OCI-LY7 (cell line): ENCODE measurements at regions of chr9 and their contacts with region 1.

Region 1: GRCh38 chr9:97921959-97922724 is at the start of gene TRMO:
- DNase-seq: peak; percentile 100
- H3K4me3 ChIP-seq: peak within 1 kb of the TSS; percentile 72
- H3K27ac ChIP-seq: peak within 1 kb of the TSS; percentile 85
- H3K4me1 ChIP-seq: peaks cover 45% of the 10 kb centered on the region
- CTCF ChIP-seq: peak; percentile 83
- total RNA-seq, gene TRMO: 17.6 and 34.7 TPM in 2 replicates

Region 2: DNA sequence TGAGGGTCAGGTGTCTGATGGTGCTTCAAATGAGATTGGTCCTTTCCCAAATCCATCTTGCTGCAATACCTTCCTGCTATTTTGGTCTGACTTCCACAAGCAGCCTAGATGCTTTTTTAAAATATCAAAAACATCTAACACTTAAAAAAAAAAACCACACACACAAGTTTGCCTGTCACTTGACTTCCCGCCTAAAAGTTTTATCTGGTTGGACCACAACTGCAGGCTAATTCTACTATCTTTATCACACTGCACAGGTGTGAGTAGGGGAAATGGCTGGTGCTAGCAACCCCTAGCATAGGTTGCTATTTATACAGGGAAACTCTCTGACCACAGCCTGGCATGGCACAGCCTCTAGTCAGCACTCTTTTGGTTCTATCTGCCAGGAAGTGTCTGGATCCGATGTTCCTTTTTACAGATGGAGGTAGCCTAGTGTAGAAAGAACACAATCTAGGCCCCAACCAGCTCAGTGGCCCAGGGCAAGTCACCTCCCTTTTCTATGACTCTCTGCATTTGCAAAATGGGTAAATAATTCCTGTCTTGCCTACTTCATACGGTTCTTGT is 16.0 kb after region 1 on chr9 and contains the start of gene HEMGN:
- CTCF ChIA-PET with region 1: interaction called, 4 read pairs
- POLR2A ChIA-PET with region 1: interaction called, 22 read pairs
- intact Hi-C with region 1: no loop called
- DNase-seq: peak; percentile 92
- H3K4me3 ChIP-seq: peak within 1 kb of the TSS; percentile 60
- H3K27ac ChIP-seq: peak within 1 kb of the TSS; percentile 91
- H3K4me1 ChIP-seq: peaks cover 93% of the 10 kb centered on the region
- CTCF ChIP-seq: no peak; the same call in 1 of the 2 replicates
- total RNA-seq, gene HEMGN: 4.3 and 5.4 TPM in 2 replicates

Region 3: DNA sequence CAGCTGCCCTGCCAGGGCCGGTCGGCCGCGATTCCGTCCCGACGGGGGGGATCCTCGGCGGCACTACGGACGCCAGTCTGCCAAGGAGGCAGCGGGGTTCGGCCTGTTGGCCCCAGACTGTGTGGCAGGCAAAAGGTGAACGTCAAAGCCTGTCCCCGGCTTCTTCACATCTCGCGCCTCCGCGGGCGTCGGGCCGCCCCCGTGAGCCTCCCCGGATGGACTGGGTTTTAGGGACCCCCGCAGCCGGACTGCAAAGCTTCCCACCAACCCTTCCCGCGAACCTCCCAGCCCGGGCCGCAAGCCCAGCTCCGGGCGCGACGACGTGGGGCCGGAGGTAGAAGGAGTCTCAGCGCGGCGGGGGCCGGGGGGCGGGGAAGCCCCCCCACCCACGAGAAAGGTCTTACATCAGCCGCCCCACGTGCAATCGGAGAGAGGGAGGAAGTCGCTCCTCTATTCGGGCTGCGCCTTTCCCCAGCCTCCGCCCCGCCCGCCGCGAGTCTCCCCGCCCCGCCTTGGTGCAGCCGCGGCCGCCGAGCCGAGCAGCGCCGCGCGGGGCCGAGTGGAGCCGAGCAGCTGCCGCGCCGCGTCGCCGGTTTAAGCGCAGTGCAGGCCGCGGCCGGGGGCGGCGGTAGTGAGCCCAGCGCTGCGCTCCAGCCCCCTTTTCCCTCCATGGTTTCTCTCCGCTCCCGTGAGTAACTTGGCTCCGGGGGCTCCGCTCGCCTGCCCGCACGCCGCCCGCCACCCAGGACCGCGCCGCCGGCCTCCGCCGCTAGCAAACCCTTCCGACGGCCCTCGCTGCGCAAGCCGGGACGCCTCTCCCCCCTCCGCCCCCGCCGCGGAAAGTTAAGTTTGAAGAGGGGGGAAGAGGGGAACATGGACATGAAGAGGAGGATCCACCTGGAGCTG is 60.8 kb after region 1 on chr9 and contains the start of gene ANP32B:
- CTCF ChIA-PET with region 1: interaction called, 4 read pairs
- POLR2A ChIA-PET with region 1: interaction called, 14 read pairs
- intact Hi-C with region 1: loop called (anchors 1 kb)
- DNase-seq: peak; percentile 96
- H3K4me3 ChIP-seq: peak within 1 kb of the TSS; percentile 92
- H3K27ac ChIP-seq: peak within 1 kb of the TSS; percentile 85
- H3K4me1 ChIP-seq: peaks cover 66% of the 10 kb centered on the region
- CTCF ChIP-seq: peak; percentile 72
- total RNA-seq, gene ANP32B: 32.1 and 52.7 TPM in 2 replicates

Region 4: DNA sequence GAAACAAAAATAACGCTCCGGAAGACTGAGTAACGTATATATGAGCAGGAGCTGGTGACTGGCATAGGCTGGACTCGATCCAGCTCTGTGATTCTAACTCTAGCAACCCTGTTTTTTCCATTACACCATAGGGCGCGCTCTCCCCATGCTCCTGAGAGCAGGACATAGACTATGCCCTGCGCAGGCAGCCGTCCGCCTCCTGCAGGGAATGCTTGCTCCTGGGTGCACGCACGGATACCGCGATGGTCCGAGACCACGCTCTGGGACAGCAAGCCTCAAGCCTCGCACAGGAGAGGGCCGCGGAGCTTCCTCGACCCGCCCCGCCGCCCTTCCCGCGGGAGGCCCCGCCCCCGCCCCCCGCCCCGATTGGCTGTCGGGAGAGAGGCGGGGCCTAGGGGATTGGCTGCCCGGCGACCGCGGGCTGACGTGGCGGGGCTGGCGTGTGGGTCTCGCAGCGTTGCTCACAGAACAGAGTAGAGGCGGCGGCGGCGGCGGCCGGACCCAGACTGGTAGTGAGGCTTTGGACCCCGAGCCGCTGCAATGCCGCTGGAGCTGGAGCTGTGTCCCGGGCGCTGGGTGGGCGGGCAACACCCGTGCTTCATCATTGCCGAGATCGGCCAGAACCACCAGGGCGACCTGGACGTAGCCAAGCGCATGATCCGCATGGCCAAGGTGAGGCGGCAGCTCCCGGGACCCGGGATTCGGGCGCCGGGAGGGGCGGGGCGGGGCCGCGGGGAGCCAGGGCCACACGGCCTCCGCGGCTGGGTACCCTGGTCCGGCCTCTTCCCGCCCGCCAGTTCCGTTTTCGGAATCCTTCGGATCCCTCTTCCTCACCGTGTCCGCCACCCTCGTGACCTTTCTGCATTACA is 134.4 kb after region 1 on chr9 and contains the start of gene NANS:
- CTCF ChIA-PET with region 1: interaction called, 8 read pairs
- POLR2A ChIA-PET with region 1: interaction called, 6 read pairs
- intact Hi-C with region 1: loop called (anchors 1 kb)
- DNase-seq: peak; percentile 94
- H3K4me3 ChIP-seq: peak within 1 kb of the TSS; percentile 87
- H3K27ac ChIP-seq: peak within 1 kb of the TSS; percentile 42
- H3K4me1 ChIP-seq: peaks cover 11% of the 10 kb centered on the region
- CTCF ChIP-seq: no peak
- total RNA-seq, gene NANS: 63.7 and 70.6 TPM in 2 replicates

Region 5: GRCh38 chr9:98255578-98256296 is 333.6 kb after region 1 on chr9 and contains the start of gene TBC1D2:
- CTCF ChIA-PET with region 1: no interaction called
- POLR2A ChIA-PET with region 1: interaction called, 7 read pairs
- intact Hi-C with region 1: loop called (anchors 1 kb)
- DNase-seq: peak; percentile 95
- H3K4me3 ChIP-seq: peak within 1 kb of the TSS; percentile 75
- H3K27ac ChIP-seq: peak within 1 kb of the TSS; percentile 85
- H3K4me1 ChIP-seq: peaks cover 17% of the 10 kb centered on the region
- CTCF ChIP-seq: peak; percentile 51; the same call in 1 of the 2 replicates
- total RNA-seq, gene TBC1D2: 2.5 and 5.5 TPM in 2 replicates

Region 6: DNA sequence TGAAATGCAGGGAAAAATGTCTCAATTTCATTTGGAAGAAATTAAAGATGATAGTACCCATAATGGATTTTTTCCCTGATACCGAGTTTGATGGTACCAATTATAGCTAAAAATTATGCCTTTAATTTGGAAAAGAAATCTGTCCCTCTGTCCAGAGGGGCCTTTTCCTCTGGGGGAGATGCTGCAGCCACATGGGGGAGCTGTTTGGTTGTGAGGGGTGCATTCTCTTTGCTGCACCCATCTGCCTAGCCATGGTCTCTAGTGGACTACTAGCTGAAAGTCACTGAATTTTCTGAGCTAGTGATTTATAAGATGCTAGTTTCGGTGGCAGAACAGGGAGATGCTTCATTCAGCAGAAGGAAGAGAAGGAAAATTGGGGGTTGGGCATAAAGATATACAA is 1309.6 kb after region 1 on chr9:
- CTCF ChIA-PET with region 1: no interaction called
- POLR2A ChIA-PET with region 1: no interaction called
- intact Hi-C with region 1: loop called (anchors 10 kb)
- DNase-seq: peak; percentile 58
- H3K4me3 ChIP-seq: no peak overlapping the region
- H3K27ac ChIP-seq: peak overlapping the region; percentile 6
- H3K4me1 ChIP-seq: peaks cover 59% of the 10 kb centered on the region
- CTCF ChIP-seq: peak; percentile 96